HCT116 (cell line): ENCODE measurements at regions of chr5 and their contacts with region 1.

Region 1: GRCh38 chr5:174327317-174328236 is 282.1 kb downstream of the NSG2 start:
- DNase-seq: peak; percentile 75
- ATAC-seq: peak; percentile 87
- H3K4me3 ChIP-seq: no peak overlapping the region
- H3K27ac ChIP-seq: peak overlapping the region; percentile 9; the same call in 1 of the 2 replicates
- H3K4me1 ChIP-seq: peaks cover 14 to 25% of the 10 kb centered on the region in 2 experiments
- H3K27me3 ChIP-seq: peaks cover 8% of the 10 kb centered on the region; the same call in 1 of the 2 replicates
- CTCF ChIP-seq: peak; percentile 86 to 97 (median 92)
- POLR2A ChIP-seq: no peak
- RAD21 ChIP-seq: peak; percentile 94

Region 2: DNA sequence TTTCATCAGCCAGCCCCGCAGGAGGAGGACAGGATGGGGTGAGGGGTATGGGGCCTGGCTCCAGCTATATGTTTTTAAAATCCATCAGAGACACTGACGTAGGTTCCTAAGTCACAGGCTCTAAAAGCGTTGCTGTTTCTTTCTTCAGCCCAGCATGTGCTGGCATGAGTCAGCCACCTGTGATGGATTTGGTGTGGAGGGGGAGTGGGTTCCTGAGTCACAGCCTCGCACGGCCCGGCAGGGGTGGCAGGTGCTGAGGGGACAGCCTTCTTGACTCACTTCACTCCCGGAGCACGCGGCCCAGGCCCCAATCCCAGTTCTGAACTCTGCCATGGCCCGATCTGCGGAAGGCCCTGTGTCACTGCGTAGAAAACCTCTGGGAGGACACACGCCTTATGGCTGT is 1407.1 kb before region 1 on chr5:
- CTCF ChIA-PET with region 1: no interaction called
- POLR2A ChIA-PET with region 1: no interaction called
- RAD21 ChIA-PET with region 1: no interaction called
- intact Hi-C with region 1: no loop called
- DNase-seq: no peak
- ATAC-seq: no peak
- H3K4me3 ChIP-seq: no peak overlapping the region
- H3K27ac ChIP-seq: no peak overlapping the region
- H3K4me1 ChIP-seq: no peaks in the 10 kb centered on the region
- H3K27me3 ChIP-seq: no peaks in the 10 kb centered on the region
- CTCF ChIP-seq: no peak
- POLR2A ChIP-seq: no peak
- RAD21 ChIP-seq: no peak

Region 3: GRCh38 chr5:174045470-174046025 is 282.0 kb before region 1 on chr5 and contains the start of gene NSG2:
- CTCF ChIA-PET with region 1: interaction called, 11 read pairs
- POLR2A ChIA-PET with region 1: no interaction called
- RAD21 ChIA-PET with region 1: interaction called in 1 of 2 experiments, 3 read pairs
- intact Hi-C with region 1: no loop called
- DNase-seq: peak; percentile 86
- ATAC-seq: peak; percentile 100
- H3K4me3 ChIP-seq: no peak within 1 kb of the TSS
- H3K27ac ChIP-seq: no peak within 1 kb of the TSS
- H3K4me1 ChIP-seq: no peaks in the 10 kb centered on the region
- H3K27me3 ChIP-seq: peaks cover 25% of the 10 kb centered on the region
- CTCF ChIP-seq: peak; percentile 81 to 98 (median 81)
- POLR2A ChIP-seq: no peak
- RAD21 ChIP-seq: peak; percentile 98
- total RNA-seq, gene NSG2: not detected

Region 4: GRCh38 chr5:174532455-174533453 is 205.2 kb after region 1 on chr5:
- CTCF ChIA-PET with region 1: no interaction called
- POLR2A ChIA-PET with region 1: no interaction called
- RAD21 ChIA-PET with region 1: no interaction called
- intact Hi-C with region 1: loop called (anchors 10 kb)
- DNase-seq: peak; percentile 91
- ATAC-seq: peak; percentile 82
- H3K4me3 ChIP-seq: peak overlapping the region; percentile 3 to 40; a peak in 3 of 4 replicates
- H3K27ac ChIP-seq: peak overlapping the region; percentile 68
- H3K4me1 ChIP-seq: peaks cover 66 to 87% of the 10 kb centered on the region in 2 experiments
- H3K27me3 ChIP-seq: no peaks in the 10 kb centered on the region
- CTCF ChIP-seq: no peak
- POLR2A ChIP-seq: peak; percentile 47
- RAD21 ChIP-seq: no peak

Region 5: GRCh38 chr5:174735498-174736330 is 408.1 kb after region 1 on chr5:
- CTCF ChIA-PET with region 1: interaction called, 3 read pairs
- POLR2A ChIA-PET with region 1: no interaction called
- RAD21 ChIA-PET with region 1: no interaction called
- intact Hi-C with region 1: loop called (anchors 1 kb)
- DNase-seq: peak; percentile 45
- ATAC-seq: peak; percentile 92
- H3K4me3 ChIP-seq: peak overlapping the region; percentile 47 to 59
- H3K27ac ChIP-seq: no peak overlapping the region
- H3K4me1 ChIP-seq: peaks cover 10 to 16% of the 10 kb centered on the region in 2 experiments
- H3K27me3 ChIP-seq: no peaks in the 10 kb centered on the region; the same call in 1 of the 2 replicates
- CTCF ChIP-seq: peak; percentile 75 to 87 (median 85)
- POLR2A ChIP-seq: no peak
- RAD21 ChIP-seq: peak; percentile 98

Region 6: GRCh38 chr5:174793684-174794328 is 466.2 kb after region 1 on chr5:
- CTCF ChIA-PET with region 1: interaction called, 7 read pairs
- POLR2A ChIA-PET with region 1: no interaction called
- RAD21 ChIA-PET with region 1: no interaction called
- intact Hi-C with region 1: loop called (anchors 1 kb)
- DNase-seq: peak; percentile 29
- ATAC-seq: peak; percentile 96
- H3K4me3 ChIP-seq: no peak overlapping the region
- H3K27ac ChIP-seq: no peak overlapping the region
- H3K4me1 ChIP-seq: peaks cover 0 to 8% of the 10 kb centered on the region in 2 experiments; a peak in 1 of 4 replicates
- H3K27me3 ChIP-seq: 0 out of 2 replicates have a peak, but pooled peaks cover 7% of the 10 kb centered on the region
- CTCF ChIP-seq: peak; percentile 85 to 94 (median 93)
- POLR2A ChIP-seq: no peak
- RAD21 ChIP-seq: peak; percentile 89

Region 7: GRCh38 chr5:174935854-174936474 is 608.4 kb after region 1 on chr5:
- CTCF ChIA-PET with region 1: no interaction called
- POLR2A ChIA-PET with region 1: no interaction called
- RAD21 ChIA-PET with region 1: no interaction called
- intact Hi-C with region 1: loop called (anchors 2 kb)
- DNase-seq: peak; percentile 51
- ATAC-seq: peak; percentile 98
- H3K4me3 ChIP-seq: no peak overlapping the region
- H3K27ac ChIP-seq: no peak overlapping the region
- H3K4me1 ChIP-seq: peaks cover 0 to 4% of the 10 kb centered on the region in 2 experiments; a peak in 1 of 4 replicates
- H3K27me3 ChIP-seq: no peaks in the 10 kb centered on the region
- CTCF ChIP-seq: peak; percentile 83 to 93 (median 92)
- POLR2A ChIP-seq: no peak
- RAD21 ChIP-seq: peak; percentile 93